GM13976 (cell line): ENCODE measurements at regions of chr11 and their contacts with region 1.

Region 1: GRCh38 chr11:75896843-75897419 is 81.9 kb downstream of the UVRAG start:
- DNase-seq: no peak
- CTCF ChIP-seq: peak; percentile 48

Region 2: GRCh38 chr11:76152086-76152681 is 255.3 kb after region 1 on chr11:
- in situ Hi-C with region 1: loop called (anchors 10 kb)
- DNase-seq: peak; percentile 93
- CTCF ChIP-seq: peak; percentile 98

Region 3: GRCh38 chr11:76318744-76319384 is 421.9 kb after region 1 on chr11:
- in situ Hi-C with region 1: loop called (anchors 10 kb)
- DNase-seq: peak; percentile 88
- CTCF ChIP-seq: peak; percentile 96